ENCODE measurements at regions of chr1 and their contacts with region 1.

Region 1: GRCh38 chr1:21368515-21369289 is 71.2 kb upstream of the NBPF3 start:
- DNase-seq: no peak
- H3K4me3 ChIP-seq: no peak overlapping the region
- CTCF ChIP-seq: peak; percentile 96

Region 2: GRCh38 chr1:21149862-21150432 is 218.8 kb before region 1 on chr1:
- CTCF ChIA-PET with region 1: no interaction called
- POLR2A ChIA-PET with region 1: no interaction called
- DNase-seq: peak; percentile 94
- H3K4me3 ChIP-seq: no peak overlapping the region
- CTCF ChIP-seq: no peak

Region 3: GRCh38 chr1:21216835-21217811 is 151.6 kb before region 1 on chr1:
- CTCF ChIA-PET with region 1: interaction called, 71 read pairs
- POLR2A ChIA-PET with region 1: interaction called, 8 read pairs
- DNase-seq: no peak
- H3K4me3 ChIP-seq: no peak overlapping the region
- CTCF ChIP-seq: peak; percentile 72

Region 4: GRCh38 chr1:21244986-21245687 is 123.6 kb before region 1 on chr1:
- CTCF ChIA-PET with region 1: interaction called, 58 read pairs
- POLR2A ChIA-PET with region 1: no interaction called
- DNase-seq: no peak
- H3K4me3 ChIP-seq: no peak overlapping the region
- CTCF ChIP-seq: peak; percentile 28

Region 5: GRCh38 chr1:21334214-21335087 is 34.3 kb before region 1 on chr1:
- CTCF ChIA-PET with region 1: interaction called, 11 read pairs
- POLR2A ChIA-PET with region 1: interaction called, 3 read pairs
- DNase-seq: peak; percentile 65
- H3K4me3 ChIP-seq: peak overlapping the region; percentile 50
- CTCF ChIP-seq: peak; percentile 93

Region 6: GRCh38 chr1:21468599-21468998 is 99.9 kb after region 1 on chr1:
- CTCF ChIA-PET with region 1: interaction called, 13 read pairs
- POLR2A ChIA-PET with region 1: no interaction called
- DNase-seq: no peak
- H3K4me3 ChIP-seq: no peak overlapping the region
- CTCF ChIP-seq: peak; percentile 26

Region 7: GRCh38 chr1:21534674-21535378 is 166.1 kb after region 1 on chr1:
- CTCF ChIA-PET with region 1: interaction called, 103 read pairs
- POLR2A ChIA-PET with region 1: no interaction called
- DNase-seq: no peak
- H3K4me3 ChIP-seq: no peak overlapping the region
- CTCF ChIP-seq: peak; percentile 63